MCF 10A (cell line): ENCODE measurements at regions of chr1 and their contacts with region 1.

Region 1: GRCh38 chr1:205760606-205761005 is 10.6 kb upstream of the NUCKS1 start:
- DNase-seq: no peak
- H3K4me3 Mint-ChIP-seq: no peak overlapping the region
- H3K27ac Mint-ChIP-seq: no peak overlapping the region
- H3K4me1 Mint-ChIP-seq: no peaks in the 10 kb centered on the region
- H3K27me3 Mint-ChIP-seq: peaks cover 15% of the 10 kb centered on the region
- CTCF ChIP-seq: no peak

Region 2: DNA sequence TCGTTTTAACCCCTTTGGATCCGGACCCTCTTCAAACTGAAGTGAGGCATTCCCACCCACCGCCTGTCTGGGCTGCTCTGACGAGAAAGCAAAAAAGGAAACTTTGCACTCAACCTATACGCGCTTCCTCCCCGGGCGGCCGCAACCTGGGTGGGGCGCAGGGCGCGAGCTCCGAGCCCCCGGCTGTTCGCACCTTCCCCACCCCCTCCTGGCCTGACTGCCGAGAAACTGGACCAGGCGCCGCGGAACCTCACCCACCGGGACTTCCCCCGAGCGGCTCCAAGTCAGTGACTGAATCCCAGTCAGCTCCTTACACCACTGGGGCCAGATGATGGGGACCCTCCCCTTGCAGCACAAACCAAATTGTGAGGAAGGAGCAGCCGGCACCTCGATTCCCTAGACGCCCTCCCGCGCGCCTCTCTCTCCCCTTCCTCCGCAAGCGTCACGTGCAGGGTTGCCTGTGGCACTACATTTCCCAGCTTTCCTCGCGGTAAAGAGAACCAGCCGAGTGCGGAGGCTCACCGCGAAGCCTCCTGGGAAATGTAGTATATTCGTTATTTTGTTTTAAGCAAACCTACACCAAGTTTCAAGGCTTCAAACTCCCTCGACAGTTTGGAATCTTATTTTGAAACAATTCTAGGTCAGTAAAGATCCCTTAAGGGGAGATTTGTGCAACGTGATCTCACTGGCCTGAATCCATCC is 14.6 kb after region 1 on chr1 and contains the start of gene RAB29:
- CTCF ChIA-PET with region 1: interaction called, 3 read pairs
- POLR2A ChIA-PET with region 1: interaction called, 34 read pairs
- intact Hi-C with region 1: no loop called
- DNase-seq: peak; percentile 95
- H3K4me3 Mint-ChIP-seq: peak within 1 kb of the TSS; percentile 88
- H3K27ac Mint-ChIP-seq: peak within 1 kb of the TSS; percentile 89
- H3K4me1 Mint-ChIP-seq: peaks cover 31% of the 10 kb centered on the region
- H3K27me3 Mint-ChIP-seq: no peaks in the 10 kb centered on the region
- CTCF ChIP-seq: no peak
- total RNA-seq, gene RAB29: 33.6 and 44.8 TPM in 2 replicates